ENCODE measurements at regions of chr20 and their contacts with region 1.

Region 1: GRCh38 chr20:3753098-3753980 is 14.2 kb downstream of the ADISSP start:
- DNase-seq: no peak
- H3K27ac ChIP-seq: peak overlapping the region; percentile 23; the same call in 1 of the 2 replicates
- CTCF ChIP-seq: peak; percentile 71

Region 2: GRCh38 chr20:3632311-3633004 is 120.9 kb before region 1 on chr20:
- CTCF ChIA-PET with region 1: no interaction called
- POLR2A ChIA-PET with region 1: no interaction called
- DNase-seq: no peak
- H3K27ac ChIP-seq: no peak overlapping the region
- CTCF ChIP-seq: no peak

Region 3: DNA sequence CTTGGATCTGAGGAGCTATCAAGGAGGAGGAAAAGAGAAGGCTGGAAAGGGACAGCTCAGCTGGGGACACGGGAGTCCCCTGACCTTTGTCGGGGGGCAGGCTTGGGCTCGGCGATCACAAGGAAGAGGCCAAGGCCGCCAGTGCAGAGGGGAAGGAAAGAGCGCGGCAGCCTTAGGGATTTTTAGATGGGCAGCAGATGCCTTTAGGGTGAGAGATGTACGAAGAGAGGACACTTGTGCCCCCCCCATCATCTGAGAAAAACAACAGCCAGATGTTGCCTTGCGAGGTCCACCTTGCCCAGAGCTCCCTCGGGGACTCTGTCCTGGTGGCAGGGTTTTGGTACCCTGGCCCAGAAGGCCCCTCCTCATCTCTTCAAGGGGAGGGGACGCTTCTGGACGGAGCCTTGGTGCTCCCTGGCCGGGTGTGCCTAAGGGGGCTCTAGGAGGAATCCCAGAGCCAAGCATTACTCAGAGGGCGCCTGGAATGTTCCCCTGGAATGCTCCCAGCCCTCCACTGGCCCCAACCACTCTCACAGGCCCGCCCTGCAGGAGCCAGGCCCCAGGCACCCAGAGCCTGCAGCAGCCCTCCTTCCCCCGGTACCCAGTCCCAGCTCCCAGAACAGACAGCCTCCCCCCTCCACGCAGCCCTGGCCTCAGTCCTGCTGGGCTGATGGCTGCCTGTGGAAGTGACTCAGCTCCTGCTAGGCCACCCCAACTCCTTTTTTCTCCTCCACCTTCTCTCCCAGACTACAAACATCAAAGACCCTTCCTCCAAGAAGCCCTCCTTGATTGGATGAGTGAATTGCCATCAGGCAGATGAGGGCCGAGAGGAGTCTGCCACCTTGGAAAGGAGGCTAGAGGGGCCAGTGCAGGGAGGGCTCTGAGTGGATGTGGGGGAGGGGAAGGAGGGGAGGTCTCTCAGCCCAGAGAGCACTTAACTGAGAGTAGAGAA is 73.3 kb before region 1 on chr20:
- CTCF ChIA-PET with region 1: interaction called, 11 read pairs
- POLR2A ChIA-PET with region 1: no interaction called
- DNase-seq: no peak
- H3K27ac ChIP-seq: peak overlapping the region; percentile 14; the same call in 1 of the 2 replicates
- CTCF ChIP-seq: no peak

Region 4: GRCh38 chr20:3786665-3787323 is 33.5 kb after region 1 on chr20 and contains the start of gene CENPB:
- CTCF ChIA-PET with region 1: no interaction called
- POLR2A ChIA-PET with region 1: no interaction called
- DNase-seq: peak; percentile 92
- H3K27ac ChIP-seq: peak within 1 kb of the TSS; percentile 83
- CTCF ChIP-seq: peak; percentile 99

Region 5: GRCh38 chr20:3846740-3847428 is 93.5 kb after region 1 on chr20 and contains the start of gene MAVS:
- CTCF ChIA-PET with region 1: no interaction called
- POLR2A ChIA-PET with region 1: interaction called, 10 read pairs
- DNase-seq: peak; percentile 89
- H3K27ac ChIP-seq: peak within 1 kb of the TSS; percentile 87
- CTCF ChIP-seq: no peak; the same call in 1 of the 2 replicates

Measured in RWPE1 (cell line).